H1 (cell line): ENCODE measurements at regions of chr4 and their contacts with region 1.

Region 1: GRCh38 chr4:90118527-90119195 is 8.5 kb upstream of the CCSER1 start:
- DNase-seq: no peak
- H3K4me3 ChIP-seq: no peak overlapping the region
- H3K27ac ChIP-seq: no peak overlapping the region
- H3K4me1 ChIP-seq: peaks cover 0 to 5% (median 3%) of the 10 kb centered on the region in 4 experiments; a peak in 3 of 7 replicates
- H3K27me3 ChIP-seq: no peaks in the 10 kb centered on the region
- CTCF ChIP-seq: no peak
- EP300 ChIP-seq: no peak
- POLR2A ChIP-seq: no peak
- RAD21 ChIP-seq: no peak

Region 2: GRCh38 chr4:89914609-89915550 is 203.8 kb before region 1 on chr4:
- CTCF ChIA-PET with region 1: no interaction called
- POLR2A ChIA-PET with region 1: no interaction called
- DNase-seq: no peak
- H3K4me3 ChIP-seq: no peak overlapping the region
- H3K27ac ChIP-seq: no peak overlapping the region
- H3K4me1 ChIP-seq: peaks cover 0 to 2% (median 0%) of the 10 kb centered on the region in 4 experiments; a peak in 2 of 7 replicates
- H3K27me3 ChIP-seq: no peaks in the 10 kb centered on the region
- CTCF ChIP-seq: no peak
- EP300 ChIP-seq: no peak
- POLR2A ChIP-seq: no peak
- RAD21 ChIP-seq: no peak; a peak in 1 of 4 replicates

Region 3: DNA sequence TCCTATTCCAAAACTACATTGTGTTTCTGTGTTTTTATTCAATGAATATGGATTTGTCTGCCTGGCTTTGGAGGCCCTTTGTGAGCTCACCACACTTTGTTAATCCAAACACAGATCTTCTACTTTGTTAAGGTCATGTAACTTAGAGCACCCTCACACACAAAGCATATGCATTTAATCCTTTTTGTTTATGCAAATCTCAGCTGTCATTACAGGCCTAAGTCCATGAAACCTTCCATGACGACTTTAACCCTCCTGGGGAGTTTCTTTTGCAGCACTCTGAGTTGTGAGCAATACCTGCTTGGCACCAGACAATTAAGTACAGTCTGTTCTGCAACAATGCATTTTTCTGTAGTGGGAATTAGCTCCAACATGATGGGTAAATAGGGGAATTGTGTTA is 23.4 kb after region 1 on chr4:
- CTCF ChIA-PET with region 1: no interaction called
- POLR2A ChIA-PET with region 1: no interaction called
- DNase-seq: no peak
- H3K4me3 ChIP-seq: no peak overlapping the region
- H3K27ac ChIP-seq: no peak overlapping the region
- H3K4me1 ChIP-seq: no peaks in the 10 kb centered on the region
- H3K27me3 ChIP-seq: no peaks in the 10 kb centered on the region
- CTCF ChIP-seq: no peak
- EP300 ChIP-seq: no peak
- POLR2A ChIP-seq: no peak
- RAD21 ChIP-seq: no peak

Region 4: GRCh38 chr4:90240333-90240732 is 121.7 kb after region 1 on chr4:
- CTCF ChIA-PET with region 1: interaction called, 13 read pairs
- POLR2A ChIA-PET with region 1: no interaction called
- DNase-seq: no peak
- H3K4me3 ChIP-seq: no peak overlapping the region
- H3K27ac ChIP-seq: no peak overlapping the region
- H3K4me1 ChIP-seq: no peaks in the 10 kb centered on the region
- H3K27me3 ChIP-seq: no peaks in the 10 kb centered on the region
- CTCF ChIP-seq: peak; percentile 24 to 53 (median 52)
- EP300 ChIP-seq: no peak
- POLR2A ChIP-seq: no peak
- RAD21 ChIP-seq: peak; percentile 77 to 80

Region 5: DNA sequence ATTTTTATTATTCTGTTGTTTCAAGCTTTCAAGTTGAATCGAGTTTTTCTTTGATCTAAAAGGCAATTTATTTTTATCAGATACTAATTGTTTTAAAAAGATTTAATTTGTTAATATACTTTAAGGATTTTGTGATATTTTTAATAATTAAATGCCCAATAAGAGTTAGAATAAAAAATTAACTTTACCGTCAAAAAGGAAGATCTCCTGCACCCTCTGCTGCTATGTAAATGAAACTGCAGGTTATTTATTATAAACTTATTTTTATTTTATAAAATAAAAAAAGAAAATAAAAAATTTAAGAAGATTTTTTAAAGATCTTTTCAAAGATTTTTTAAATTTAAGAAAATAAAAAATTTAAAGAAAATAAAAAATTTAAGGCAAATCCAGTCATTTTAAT is 174.7 kb after region 1 on chr4:
- CTCF ChIA-PET with region 1: interaction called, 14 read pairs
- POLR2A ChIA-PET with region 1: no interaction called
- DNase-seq: no peak
- H3K4me3 ChIP-seq: no peak overlapping the region
- H3K27ac ChIP-seq: no peak overlapping the region
- H3K4me1 ChIP-seq: no peaks in the 10 kb centered on the region
- H3K27me3 ChIP-seq: no peaks in the 10 kb centered on the region
- CTCF ChIP-seq: peak in 1 of 3 experiments; percentile 27; a peak in 1 of 4 replicates
- EP300 ChIP-seq: no peak
- POLR2A ChIP-seq: no peak
- RAD21 ChIP-seq: peak in 1 of 2 experiments; percentile 62; a peak in 3 of 4 replicates